Activated T-helper 1 cell treated with anti-CD3 and anti-CD28 coated beads, Interleukin-12 subunit alpha, Interleukin-12 subunit beta, Interleukin-2, Interleukin-4 antibody, amounts not matched to agents 30 ng/mL and 10 ng/mL and 1 ng/mL, durations not matched to agents 14 hours and 24 hours and 36 hours (primary cell): ENCODE measurements at regions of chr3 and their contacts with region 1.

Region 1: GRCh38 chr3:56988458-56989168 is 71.9 kb upstream of the SPATA12 start:
- DNase-seq: peak; percentile 46
- H3K4me3 Mint-ChIP-seq: no peak overlapping the region
- H3K27ac Mint-ChIP-seq: no peak overlapping the region
- H3K4me1 Mint-ChIP-seq: peaks cover 27% of the 10 kb centered on the region
- H3K27me3 Mint-ChIP-seq: peaks cover 14% of the 10 kb centered on the region

Region 2: GRCh38 chr3:56702490-56703315 is 285.9 kb before region 1 on chr3:
- intact Hi-C with region 1: loop called (anchors 1 kb)
- DNase-seq: no peak
- H3K4me3 Mint-ChIP-seq: no peak overlapping the region
- H3K27ac Mint-ChIP-seq: no peak overlapping the region
- H3K4me1 Mint-ChIP-seq: peaks cover 29% of the 10 kb centered on the region
- H3K27me3 Mint-ChIP-seq: no peaks in the 10 kb centered on the region

Region 3: GRCh38 chr3:56837196-56837955 is 151.2 kb before region 1 on chr3:
- intact Hi-C with region 1: no loop called
- DNase-seq: no peak
- H3K4me3 Mint-ChIP-seq: no peak overlapping the region
- H3K27ac Mint-ChIP-seq: no peak overlapping the region
- H3K4me1 Mint-ChIP-seq: peaks cover 13% of the 10 kb centered on the region
- H3K27me3 Mint-ChIP-seq: no peaks in the 10 kb centered on the region

Region 4: DNA sequence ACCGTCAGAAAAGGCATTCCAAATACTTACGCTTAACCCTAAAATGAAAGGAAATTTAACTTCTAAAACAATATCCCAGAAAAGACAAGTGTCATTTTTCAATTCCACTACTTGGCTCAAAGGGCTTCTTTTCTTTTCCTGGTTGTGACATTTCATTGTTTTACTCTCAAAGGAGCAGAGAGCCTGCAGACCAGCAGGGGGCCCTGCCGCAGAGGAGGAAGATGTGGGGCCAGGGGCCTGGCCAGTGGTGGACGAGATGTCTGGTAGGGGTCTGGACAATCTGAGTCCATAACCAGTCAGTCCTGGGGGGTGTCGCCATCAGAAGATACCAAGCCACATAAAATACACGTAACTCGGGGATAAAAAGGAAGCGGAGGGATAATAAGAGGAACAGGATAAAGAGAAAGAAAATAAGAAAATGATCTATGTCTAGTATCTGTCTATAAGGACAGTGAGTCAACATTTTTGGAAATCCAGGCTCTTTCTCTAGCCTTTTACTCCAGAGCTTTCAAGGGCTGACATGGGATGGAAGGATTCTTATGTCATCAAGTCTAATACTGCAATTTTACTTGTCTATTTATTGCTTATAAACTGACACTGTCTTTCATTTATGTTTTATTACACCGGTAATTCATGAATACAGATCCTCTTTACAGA is 132.6 kb before region 1 on chr3:
- intact Hi-C with region 1: loop called (anchors 2 kb)
- DNase-seq: no peak
- H3K4me3 Mint-ChIP-seq: no peak overlapping the region
- H3K27ac Mint-ChIP-seq: no peak overlapping the region
- H3K4me1 Mint-ChIP-seq: peaks cover 48% of the 10 kb centered on the region
- H3K27me3 Mint-ChIP-seq: peaks cover 2% of the 10 kb centered on the region

Region 5: DNA sequence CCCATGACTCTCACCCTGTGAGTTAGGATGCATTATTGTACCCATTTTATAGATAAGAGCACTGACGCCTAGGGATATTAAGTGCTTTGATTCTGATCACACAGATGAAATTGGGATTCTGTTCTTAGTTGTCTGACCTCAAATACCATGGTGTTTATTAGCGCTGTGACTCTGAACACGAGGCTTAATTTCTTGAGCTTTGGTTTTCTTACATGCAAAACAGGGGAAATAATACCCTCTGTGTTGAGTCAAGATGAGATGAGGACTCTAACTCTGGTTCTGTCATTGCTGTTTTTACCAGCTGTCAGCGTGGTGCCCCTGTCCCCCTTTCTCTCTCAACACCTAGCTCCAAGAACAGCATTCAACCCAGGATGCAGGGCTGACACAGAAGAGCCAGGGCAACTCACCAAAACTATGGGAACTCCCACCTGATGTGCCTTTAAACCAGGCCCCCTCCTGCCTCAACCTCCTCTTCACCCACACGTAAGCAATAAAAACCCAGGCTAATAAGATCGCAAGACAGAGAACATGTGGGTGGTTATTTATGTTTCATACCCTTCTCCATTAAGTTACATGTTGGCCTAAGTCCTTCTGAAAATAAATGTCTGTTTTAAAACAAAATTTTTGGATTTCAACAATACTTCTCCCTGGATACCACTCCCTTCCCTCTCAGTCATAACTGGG is 28.2 kb before region 1 on chr3:
- intact Hi-C with region 1: no loop called
- DNase-seq: no peak
- H3K4me3 Mint-ChIP-seq: no peak overlapping the region
- H3K27ac Mint-ChIP-seq: no peak overlapping the region
- H3K4me1 Mint-ChIP-seq: peaks cover 7% of the 10 kb centered on the region
- H3K27me3 Mint-ChIP-seq: no peaks in the 10 kb centered on the region